ENCODE measurements at regions of chr16 and their contacts with region 1.

Region 1: GRCh38 chr16:18789850-18790724 is at the start of gene RPS15A:
- DNase-seq: peak; percentile 98
- H3K4me3 ChIP-seq: peak within 1 kb of the TSS; percentile 69 to 94 (median 83)
- H3K27ac ChIP-seq: peak within 1 kb of the TSS; percentile 82 to 90 (median 86)
- H3K4me1 ChIP-seq: peaks cover 42 to 51% (median 49%) of the 10 kb centered on the region in 4 donors
- H3K27me3 ChIP-seq: no peaks in the 10 kb centered on the region
- CTCF ChIP-seq: peak in 1 of 3 experiments; percentile 17
- EP300 ChIP-seq: no peak
- POLR2A ChIP-seq: peak; percentile 80
- total RNA-seq, gene RPS15A: 356 to 2,439 (median 1,496) TPM

Region 2: DNA sequence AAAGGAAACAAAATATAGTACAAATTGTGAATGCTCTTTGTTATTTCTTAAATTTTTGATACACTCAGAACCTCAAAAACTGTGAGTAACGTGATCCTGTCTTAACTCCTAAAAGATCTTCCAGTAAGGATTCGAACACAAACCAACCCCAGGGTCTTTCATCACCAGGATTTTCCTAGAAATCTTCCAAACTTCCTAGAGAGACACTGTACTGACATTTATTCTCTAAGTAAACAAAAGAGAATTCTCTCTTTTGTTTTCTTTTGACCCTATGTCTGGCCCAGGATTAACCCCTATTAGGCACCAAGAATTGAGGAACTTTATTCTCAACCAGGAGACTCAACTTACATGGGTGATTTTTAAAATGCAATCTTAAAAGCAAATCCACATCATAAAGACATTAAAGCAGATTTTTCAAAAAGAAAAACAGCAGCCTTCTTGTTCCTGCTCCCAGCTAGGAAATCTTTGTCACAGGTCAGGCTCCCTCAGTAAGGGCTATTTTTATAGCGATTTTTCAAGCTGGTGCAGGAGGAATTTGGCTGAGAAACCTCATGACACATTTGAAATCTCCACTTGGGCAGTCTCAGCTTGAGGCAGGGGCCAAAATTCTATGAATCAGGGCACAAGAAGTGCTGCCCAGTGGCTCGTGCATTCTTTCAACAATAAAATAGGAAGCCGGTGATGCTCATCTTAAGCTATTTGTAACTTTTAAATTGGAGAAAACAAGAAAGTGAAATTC is 142.3 kb after region 1 on chr16:
- intact Hi-C with region 1: no loop called
- DNase-seq: no peak
- H3K4me3 ChIP-seq: no peak overlapping the region
- H3K27ac ChIP-seq: peak overlapping the region; percentile 60 to 77 (median 69)
- H3K4me1 ChIP-seq: peaks cover 7 to 21% (median 20%) of the 10 kb centered on the region in 4 donors
- H3K27me3 ChIP-seq: no peaks in the 10 kb centered on the region
- CTCF ChIP-seq: no peak
- EP300 ChIP-seq: no peak
- POLR2A ChIP-seq: no peak

Region 3: DNA sequence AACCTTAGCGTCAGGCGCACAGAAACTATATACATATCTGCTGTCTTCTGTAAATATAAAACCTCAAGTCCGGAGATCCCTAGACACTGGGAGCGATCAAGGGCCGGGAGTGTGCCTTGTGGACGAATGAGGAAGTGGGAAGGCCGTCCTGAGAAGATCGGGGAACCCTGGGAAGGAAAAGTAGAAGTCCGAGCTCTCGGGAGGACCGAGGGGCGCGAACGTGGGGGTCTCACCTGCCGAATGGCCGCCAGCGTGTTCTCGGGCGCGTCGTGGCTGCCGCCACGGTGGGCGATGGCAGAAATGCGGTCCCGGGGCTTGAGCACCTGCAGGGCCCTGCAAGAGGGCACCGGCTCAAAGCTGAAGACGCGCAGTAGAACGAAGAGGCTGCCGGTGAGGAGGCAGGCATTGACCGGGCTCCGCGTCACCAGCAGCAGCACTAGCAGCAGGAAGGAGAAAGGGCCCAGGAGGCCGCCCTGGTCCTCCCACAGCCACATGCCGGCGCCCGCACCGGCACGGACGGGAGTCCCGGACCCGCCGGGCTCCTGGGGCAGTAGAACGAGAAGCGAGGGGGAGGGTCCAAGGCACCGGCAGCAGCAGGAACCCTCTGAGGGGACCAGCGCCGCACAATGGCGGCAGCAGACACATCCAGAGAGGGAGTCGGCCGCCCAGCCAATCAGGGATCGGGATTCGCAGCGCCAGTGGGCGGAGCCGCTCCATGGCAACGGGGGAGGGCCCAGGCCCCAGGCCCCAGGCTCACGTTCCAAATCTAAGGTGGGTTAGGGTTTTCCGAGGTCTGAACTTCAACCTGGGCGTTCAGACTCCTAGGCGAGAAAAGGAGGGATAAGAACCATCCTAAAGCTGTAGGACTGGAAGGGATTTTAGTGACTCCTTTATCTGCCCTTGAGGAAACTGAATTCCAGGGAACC is 731.6 kb after region 1 on chr16 and contains the start of gene GDE1:
- intact Hi-C with region 1: loop called (anchors 10 kb)
- DNase-seq: peak; percentile 98
- H3K4me3 ChIP-seq: peak within 1 kb of the TSS; percentile 80 to 92 (median 88)
- H3K27ac ChIP-seq: peak within 1 kb of the TSS; percentile 88 to 97 (median 93)
- H3K4me1 ChIP-seq: peaks cover 31 to 73% (median 63%) of the 10 kb centered on the region in 4 donors
- H3K27me3 ChIP-seq: no peaks in the 10 kb centered on the region
- CTCF ChIP-seq: peak in 2 of 3 experiments; percentile 20 to 26
- EP300 ChIP-seq: no peak
- POLR2A ChIP-seq: peak; percentile 76
- total RNA-seq, gene GDE1: 90.9 to 124 (median 109) TPM